ENCODE measurements at regions of chr7 and their contacts with region 1.

Region 1: DNA sequence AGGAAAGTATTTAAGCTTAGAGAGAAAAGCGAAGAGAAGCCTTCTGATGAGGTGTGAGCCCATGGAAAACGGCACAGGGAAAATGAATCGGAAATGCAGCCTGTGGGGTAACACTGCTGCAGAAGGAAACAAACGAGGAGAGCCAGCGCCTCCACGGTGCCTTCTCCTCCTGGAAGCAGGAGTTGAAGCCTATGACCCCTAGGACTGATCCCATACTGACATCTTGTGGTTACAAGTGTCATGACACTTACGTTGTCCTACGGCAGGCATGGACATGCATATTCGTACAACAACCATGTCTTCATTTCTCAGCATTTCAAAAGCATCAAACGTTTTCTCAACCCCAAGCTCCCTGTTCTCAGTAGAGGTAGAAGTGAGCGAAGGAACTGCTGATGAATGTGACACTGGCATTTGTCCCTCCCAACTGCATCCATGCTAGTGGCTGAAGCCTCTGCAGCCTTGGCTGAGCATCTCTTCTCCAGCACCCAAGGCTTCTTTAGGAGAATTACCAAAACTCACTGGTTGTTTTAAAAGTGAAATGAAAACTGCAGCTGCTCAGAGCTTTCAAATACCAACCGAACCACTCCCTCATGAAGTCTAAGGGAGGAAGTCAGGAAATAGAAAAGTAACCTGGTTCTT is 160.2 kb downstream of the JAZF1 start:
- DNase-seq: peak; percentile 85
- H3K4me3 Mint-ChIP-seq: no peak overlapping the region
- H3K27ac Mint-ChIP-seq: no peak overlapping the region
- H3K4me1 Mint-ChIP-seq: no peaks in the 10 kb centered on the region
- H3K27me3 Mint-ChIP-seq: no peaks in the 10 kb centered on the region
- CTCF ChIP-seq: peak; percentile 84

Region 2: GRCh38 chr7:27269455-27269854 is 751.0 kb before region 1 on chr7:
- CTCF ChIA-PET with region 1: no interaction called
- POLR2A ChIA-PET with region 1: no interaction called
- intact Hi-C with region 1: no loop called
- DNase-seq: no peak
- H3K4me3 Mint-ChIP-seq: no peak overlapping the region
- H3K27ac Mint-ChIP-seq: no peak overlapping the region
- H3K4me1 Mint-ChIP-seq: no peaks in the 10 kb centered on the region
- H3K27me3 Mint-ChIP-seq: no peaks in the 10 kb centered on the region
- CTCF ChIP-seq: no peak

Region 3: GRCh38 chr7:27689591-27690164 is 330.7 kb before region 1 on chr7:
- CTCF ChIA-PET with region 1: no interaction called
- POLR2A ChIA-PET with region 1: no interaction called
- intact Hi-C with region 1: loop called (anchors 10 kb)
- DNase-seq: peak; percentile 37
- H3K4me3 Mint-ChIP-seq: no peak overlapping the region
- H3K27ac Mint-ChIP-seq: no peak overlapping the region
- H3K4me1 Mint-ChIP-seq: no peaks in the 10 kb centered on the region
- H3K27me3 Mint-ChIP-seq: no peaks in the 10 kb centered on the region
- CTCF ChIP-seq: no peak

Region 4: DNA sequence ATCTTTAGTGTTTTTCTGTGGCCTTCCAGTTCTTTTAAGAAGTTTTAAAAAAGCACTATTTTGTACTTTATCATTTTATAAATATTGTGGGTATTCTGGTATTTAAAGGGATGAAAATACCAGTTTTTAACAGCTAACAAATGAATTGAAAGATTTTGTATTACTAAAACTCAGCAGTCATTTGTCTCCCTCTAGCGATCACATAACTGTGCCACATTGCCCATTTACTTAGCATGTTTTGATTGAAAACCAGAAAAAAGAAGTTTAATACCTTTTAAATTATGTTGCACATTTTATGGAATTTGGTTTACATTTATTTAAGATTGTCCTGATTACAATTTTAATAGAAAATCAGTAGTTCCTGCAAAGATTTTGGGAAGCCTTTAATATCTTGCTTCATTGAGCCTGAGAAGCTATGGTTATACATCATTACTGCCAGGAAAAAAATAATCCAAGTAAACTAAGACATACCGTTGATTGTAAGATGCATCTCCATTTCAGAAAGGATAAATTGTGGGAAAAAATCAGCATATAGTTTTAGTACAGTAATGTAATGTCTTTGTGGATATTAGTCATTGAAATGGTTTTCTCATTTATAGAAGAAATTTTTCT is 245.6 kb before region 1 on chr7:
- CTCF ChIA-PET with region 1: interaction called, 11 read pairs
- POLR2A ChIA-PET with region 1: no interaction called
- intact Hi-C with region 1: loop called (anchors 5 kb)
- DNase-seq: peak; percentile 48
- H3K4me3 Mint-ChIP-seq: no peak overlapping the region
- H3K27ac Mint-ChIP-seq: no peak overlapping the region
- H3K4me1 Mint-ChIP-seq: peaks cover 10% of the 10 kb centered on the region
- H3K27me3 Mint-ChIP-seq: no peaks in the 10 kb centered on the region
- CTCF ChIP-seq: peak; percentile 71

Region 5: DNA sequence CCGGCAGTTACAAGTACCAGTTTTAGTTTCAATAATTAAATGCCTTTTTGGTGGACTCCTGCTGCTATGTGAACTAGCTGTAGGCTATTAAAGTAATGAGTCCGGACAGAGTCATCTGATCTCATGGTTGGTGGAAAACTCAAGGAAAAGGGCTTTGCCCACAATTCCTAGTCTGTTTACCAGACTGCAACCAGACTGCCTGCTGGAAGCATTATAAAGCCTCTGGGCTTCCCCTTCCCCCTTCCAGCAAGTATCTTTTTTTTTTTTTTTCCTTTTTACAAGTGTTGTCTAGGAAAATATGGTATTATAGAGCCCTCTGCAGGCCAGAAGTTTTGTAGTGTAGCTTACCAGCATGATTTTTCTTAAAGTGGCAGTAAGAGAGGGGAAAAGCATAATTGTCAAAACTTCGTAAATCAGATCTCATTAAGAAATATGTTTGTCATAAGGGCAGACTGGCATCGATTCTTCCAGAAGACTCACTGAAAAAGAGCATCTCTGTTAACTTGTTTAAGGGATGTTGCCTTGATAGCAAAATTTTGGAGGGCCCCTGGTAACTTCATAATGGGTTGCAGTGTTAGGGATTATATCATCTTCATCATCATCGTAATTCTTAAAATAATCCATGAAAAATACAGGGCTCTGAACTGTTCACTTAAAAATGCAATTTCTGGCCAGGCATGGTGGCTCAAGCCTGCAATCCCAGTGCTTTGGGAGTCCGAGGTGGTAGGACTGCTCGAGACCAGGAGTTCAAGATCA is 99.2 kb before region 1 on chr7:
- CTCF ChIA-PET with region 1: interaction called, 6 read pairs
- POLR2A ChIA-PET with region 1: interaction called, 4 read pairs
- intact Hi-C with region 1: loop called (anchors 1 kb)
- DNase-seq: peak; percentile 72
- H3K4me3 Mint-ChIP-seq: no peak overlapping the region
- H3K27ac Mint-ChIP-seq: no peak overlapping the region
- H3K4me1 Mint-ChIP-seq: no peaks in the 10 kb centered on the region
- H3K27me3 Mint-ChIP-seq: no peaks in the 10 kb centered on the region
- CTCF ChIP-seq: peak; percentile 46

Region 6: GRCh38 chr7:28037220-28038010 is 17.0 kb after region 1 on chr7:
- CTCF ChIA-PET with region 1: interaction called, 19 read pairs
- POLR2A ChIA-PET with region 1: interaction called, 4 read pairs
- intact Hi-C with region 1: no loop called
- DNase-seq: peak; percentile 93
- H3K4me3 Mint-ChIP-seq: peak overlapping the region; percentile 12
- H3K27ac Mint-ChIP-seq: peak overlapping the region; percentile 72
- H3K4me1 Mint-ChIP-seq: peaks cover 58% of the 10 kb centered on the region
- H3K27me3 Mint-ChIP-seq: no peaks in the 10 kb centered on the region
- CTCF ChIP-seq: no peak

Region 7: GRCh38 chr7:28078036-28078901 is 57.8 kb after region 1 on chr7:
- CTCF ChIA-PET with region 1: interaction called, 10 read pairs
- POLR2A ChIA-PET with region 1: no interaction called
- intact Hi-C with region 1: loop called (anchors 2 kb)
- DNase-seq: peak; percentile 55
- H3K4me3 Mint-ChIP-seq: no peak overlapping the region
- H3K27ac Mint-ChIP-seq: no peak overlapping the region
- H3K4me1 Mint-ChIP-seq: peaks cover 22% of the 10 kb centered on the region
- H3K27me3 Mint-ChIP-seq: no peaks in the 10 kb centered on the region
- CTCF ChIP-seq: peak; percentile 87

Region 8: DNA sequence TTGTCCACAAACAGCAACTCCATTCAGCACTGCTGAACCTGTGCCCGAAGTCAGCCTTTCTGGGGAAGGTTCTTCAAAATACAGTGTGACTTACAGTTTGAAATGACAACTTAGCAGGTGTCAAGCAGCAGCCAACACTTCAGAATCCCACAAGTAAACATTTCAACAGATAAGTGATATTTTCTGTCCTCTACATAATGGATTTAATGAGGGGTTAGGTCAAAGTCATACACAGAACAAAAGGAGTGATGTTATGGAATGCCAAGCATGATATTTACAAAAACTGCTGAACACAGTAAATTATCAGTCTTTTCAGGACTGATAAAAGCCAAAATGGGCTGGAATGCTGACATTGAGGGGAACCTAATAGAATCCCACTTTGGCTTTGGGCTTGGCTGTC is 237.8 kb after region 1 on chr7:
- CTCF ChIA-PET with region 1: no interaction called
- POLR2A ChIA-PET with region 1: no interaction called
- intact Hi-C with region 1: no loop called
- DNase-seq: no peak
- H3K4me3 Mint-ChIP-seq: no peak overlapping the region
- H3K27ac Mint-ChIP-seq: no peak overlapping the region
- H3K4me1 Mint-ChIP-seq: no peaks in the 10 kb centered on the region
- H3K27me3 Mint-ChIP-seq: peaks cover 15% of the 10 kb centered on the region
- CTCF ChIP-seq: no peak

Measured in MCF 10A (cell line).